MCF 10A (cell line): ENCODE measurements at regions of chr2 and their contacts with region 1.

Region 1: DNA sequence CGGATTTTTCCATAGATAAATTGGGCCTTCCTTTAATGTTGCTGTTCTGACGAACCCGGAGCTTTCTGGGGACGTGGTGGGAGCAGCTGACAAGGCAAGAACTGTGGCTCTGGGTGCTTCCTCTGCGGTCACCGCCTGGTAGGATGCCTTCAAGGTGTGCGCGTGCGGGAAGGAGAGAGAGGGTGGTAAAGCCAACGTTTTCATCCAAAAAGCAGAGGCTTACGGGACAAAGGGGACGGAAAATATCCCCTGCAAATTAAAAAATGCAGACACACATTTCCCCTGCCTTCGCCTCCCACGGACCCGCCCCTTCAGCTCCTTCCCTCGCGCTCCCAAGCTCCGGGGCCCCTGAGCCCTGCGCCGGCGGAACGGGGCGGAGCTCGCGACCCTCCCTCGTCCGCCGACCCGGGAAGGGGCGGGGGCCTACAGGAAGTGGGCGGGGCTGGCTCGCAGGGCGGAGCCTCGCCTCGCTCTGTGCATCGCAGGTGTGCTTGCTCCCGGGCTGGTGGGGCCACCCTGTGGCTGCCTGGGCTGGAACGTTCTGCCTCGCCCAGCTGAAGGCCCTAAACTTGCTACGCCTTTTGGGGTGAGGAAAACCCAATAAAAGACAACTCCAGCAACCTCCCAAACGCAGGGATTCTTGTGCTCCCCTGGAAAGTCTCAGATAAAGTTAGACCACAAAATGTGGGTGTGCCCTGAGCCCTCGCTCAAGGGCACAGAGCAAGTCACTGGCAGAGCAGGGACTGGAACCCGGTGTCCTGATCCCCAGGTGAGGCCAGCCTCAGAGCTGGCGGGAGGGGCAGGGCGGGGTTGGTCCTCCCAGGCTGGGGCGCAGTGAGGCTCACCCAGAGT is 25.4 kb upstream of the SLC66A3 start:
- DNase-seq: peak; percentile 34
- H3K4me3 Mint-ChIP-seq: peak overlapping the region; percentile 21
- H3K27ac Mint-ChIP-seq: no peak overlapping the region
- H3K4me1 Mint-ChIP-seq: peaks cover 7% of the 10 kb centered on the region
- H3K27me3 Mint-ChIP-seq: peaks cover 11% of the 10 kb centered on the region
- CTCF ChIP-seq: no peak

Region 2: GRCh38 chr2:10493636-10494281 is 636.1 kb before region 1 on chr2:
- CTCF ChIA-PET with region 1: no interaction called
- POLR2A ChIA-PET with region 1: no interaction called
- intact Hi-C with region 1: no loop called
- DNase-seq: peak; percentile 98
- H3K4me3 Mint-ChIP-seq: no peak overlapping the region
- H3K27ac Mint-ChIP-seq: peak overlapping the region; percentile 77
- H3K4me1 Mint-ChIP-seq: peaks cover 27% of the 10 kb centered on the region
- H3K27me3 Mint-ChIP-seq: peaks cover 15% of the 10 kb centered on the region
- CTCF ChIP-seq: no peak

Region 3: DNA sequence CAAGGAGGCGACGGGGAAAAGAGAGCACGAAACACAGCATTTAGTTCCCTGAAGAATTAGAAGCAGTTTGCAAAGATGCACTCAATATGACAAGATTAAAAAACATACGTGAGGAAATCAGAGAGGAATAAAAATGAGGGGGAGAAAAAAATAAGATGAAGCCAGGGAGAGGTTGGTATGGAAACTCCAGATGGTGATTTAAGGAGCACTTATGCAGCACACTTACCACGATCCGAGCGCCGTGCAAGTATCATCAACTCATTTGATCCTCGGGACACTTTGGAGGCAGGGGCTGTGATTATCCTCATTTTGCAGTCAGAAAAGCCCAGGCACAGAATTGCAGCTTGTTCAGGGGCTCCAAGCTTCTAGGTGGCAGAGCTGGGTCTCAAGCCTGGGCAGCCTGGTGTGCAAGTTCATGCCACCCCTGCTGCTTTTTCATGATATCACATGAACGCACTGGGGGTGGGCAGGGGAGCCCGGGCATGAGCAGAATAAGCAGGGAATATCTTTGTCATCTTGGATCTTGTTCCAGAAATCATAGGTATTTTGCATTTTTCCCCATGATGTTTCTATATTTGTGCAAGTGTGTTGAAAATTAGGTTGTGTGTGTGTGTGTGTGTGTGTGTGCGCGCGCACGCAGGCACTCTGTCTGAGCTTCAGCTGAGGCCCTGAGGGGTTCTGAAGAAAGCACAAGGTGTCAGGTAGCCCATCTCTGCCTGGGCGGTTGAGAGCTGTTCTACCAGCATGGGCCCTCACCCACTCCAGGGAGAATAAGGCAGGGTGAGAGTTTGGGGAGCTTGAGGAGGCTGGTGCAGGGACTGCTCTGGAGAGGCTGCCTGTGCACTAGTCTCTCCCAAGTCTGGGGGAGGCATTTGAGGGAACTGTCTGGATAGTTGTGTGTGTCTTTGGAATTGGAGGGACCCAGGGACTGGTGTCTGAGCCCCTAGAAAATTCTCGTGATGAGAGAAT is 292.2 kb before region 1 on chr2:
- CTCF ChIA-PET with region 1: interaction called, 189 read pairs
- POLR2A ChIA-PET with region 1: no interaction called
- intact Hi-C with region 1: no loop called
- DNase-seq: no peak
- H3K4me3 Mint-ChIP-seq: no peak overlapping the region
- H3K27ac Mint-ChIP-seq: no peak overlapping the region
- H3K4me1 Mint-ChIP-seq: no peaks in the 10 kb centered on the region
- H3K27me3 Mint-ChIP-seq: peaks cover 28% of the 10 kb centered on the region
- CTCF ChIP-seq: no peak

Region 4: DNA sequence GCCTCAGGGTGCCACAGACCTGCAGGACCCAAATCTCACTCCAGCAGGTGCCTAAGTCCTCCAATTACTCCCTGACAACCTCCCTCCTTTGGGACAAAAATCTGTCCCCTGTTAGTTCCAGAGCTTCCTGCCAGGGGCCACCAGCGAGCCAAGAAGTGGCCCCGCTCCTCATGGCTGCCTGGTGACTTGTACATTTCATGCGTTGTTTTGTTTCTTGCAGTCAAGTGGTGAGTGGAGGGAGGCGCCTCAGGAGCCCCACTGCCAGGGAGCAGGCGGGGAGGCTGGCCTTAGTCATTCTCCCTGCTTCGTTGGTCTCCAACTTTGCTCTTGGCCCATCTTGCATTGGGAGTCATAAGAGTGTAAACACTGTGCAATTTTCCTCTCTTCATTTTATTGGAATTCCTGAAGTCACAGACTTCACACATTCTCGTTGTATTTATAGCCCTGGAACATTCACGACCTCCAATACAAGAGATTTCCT is 136.8 kb before region 1 on chr2:
- CTCF ChIA-PET with region 1: no interaction called
- POLR2A ChIA-PET with region 1: no interaction called
- intact Hi-C with region 1: no loop called
- DNase-seq: no peak
- H3K4me3 Mint-ChIP-seq: no peak overlapping the region
- H3K27ac Mint-ChIP-seq: no peak overlapping the region
- H3K4me1 Mint-ChIP-seq: no peaks in the 10 kb centered on the region
- H3K27me3 Mint-ChIP-seq: peaks cover 49% of the 10 kb centered on the region
- CTCF ChIP-seq: no peak

Region 5: DNA sequence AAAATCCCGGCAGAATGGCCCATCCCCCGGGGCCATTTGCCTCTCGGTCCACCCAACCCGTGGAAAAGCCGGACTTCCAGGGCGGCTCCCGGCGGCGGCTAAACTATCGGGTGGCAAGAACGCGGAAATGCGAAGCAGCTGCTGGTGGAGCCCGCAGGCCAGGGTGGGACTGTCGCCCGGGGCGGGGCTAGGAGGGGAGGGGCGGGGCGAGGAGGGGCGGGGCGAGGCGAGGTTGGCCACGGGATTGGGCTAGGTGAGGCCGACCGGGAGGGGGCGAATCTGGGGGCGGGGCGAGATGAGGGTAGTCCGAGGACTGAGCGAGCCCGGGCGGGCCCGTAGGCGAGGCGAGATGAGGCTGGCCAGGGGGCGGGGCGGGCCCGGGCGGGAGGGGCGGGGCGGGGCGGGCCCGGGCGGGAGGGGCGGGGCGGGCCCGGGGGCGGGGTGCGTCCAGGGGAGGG is 25.1 kb after region 1 on chr2:
- CTCF ChIA-PET with region 1: interaction called, 4 read pairs
- POLR2A ChIA-PET with region 1: interaction called, 11 read pairs
- intact Hi-C with region 1: no loop called
- DNase-seq: peak; percentile 95
- H3K4me3 Mint-ChIP-seq: peak overlapping the region; percentile 67
- H3K27ac Mint-ChIP-seq: no peak overlapping the region
- H3K4me1 Mint-ChIP-seq: no peaks in the 10 kb centered on the region
- H3K27me3 Mint-ChIP-seq: no peaks in the 10 kb centered on the region
- CTCF ChIP-seq: no peak

Region 6: GRCh38 chr2:11212645-11213044 is 82.8 kb after region 1 on chr2:
- CTCF ChIA-PET with region 1: interaction called, 15 read pairs
- POLR2A ChIA-PET with region 1: no interaction called
- intact Hi-C with region 1: no loop called
- DNase-seq: no peak
- H3K4me3 Mint-ChIP-seq: no peak overlapping the region
- H3K27ac Mint-ChIP-seq: peak overlapping the region; percentile 18
- H3K4me1 Mint-ChIP-seq: no peaks in the 10 kb centered on the region
- H3K27me3 Mint-ChIP-seq: no peaks in the 10 kb centered on the region
- CTCF ChIP-seq: no peak

Region 7: DNA sequence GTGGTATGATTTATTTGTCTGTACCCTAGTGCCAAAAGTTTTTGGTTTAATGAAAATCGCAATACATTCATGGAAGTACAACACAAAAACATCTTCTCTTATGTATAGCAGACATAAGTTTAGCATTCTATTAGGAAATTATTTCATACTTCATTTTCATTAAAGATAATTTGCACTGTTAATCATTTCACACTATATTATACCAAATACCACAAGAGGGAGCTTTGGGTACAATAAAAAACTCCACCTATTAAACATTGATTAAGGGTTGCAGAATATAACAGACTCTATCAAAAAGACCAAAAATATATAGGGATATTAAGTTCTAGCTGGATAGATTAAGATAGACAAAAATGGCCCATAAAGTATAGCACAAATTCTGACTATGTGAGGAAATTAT is 104.5 kb after region 1 on chr2:
- CTCF ChIA-PET with region 1: interaction called, 14 read pairs
- POLR2A ChIA-PET with region 1: no interaction called
- intact Hi-C with region 1: loop called (anchors 2 kb)
- DNase-seq: peak; percentile 36
- H3K4me3 Mint-ChIP-seq: no peak overlapping the region
- H3K27ac Mint-ChIP-seq: no peak overlapping the region
- H3K4me1 Mint-ChIP-seq: no peaks in the 10 kb centered on the region
- H3K27me3 Mint-ChIP-seq: no peaks in the 10 kb centered on the region
- CTCF ChIP-seq: peak; percentile 64

Region 8: GRCh38 chr2:11305958-11306357 is 176.1 kb after region 1 on chr2:
- CTCF ChIA-PET with region 1: no interaction called
- POLR2A ChIA-PET with region 1: no interaction called
- intact Hi-C with region 1: no loop called
- DNase-seq: peak; percentile 46
- H3K4me3 Mint-ChIP-seq: no peak overlapping the region
- H3K27ac Mint-ChIP-seq: no peak overlapping the region
- H3K4me1 Mint-ChIP-seq: peaks cover 17% of the 10 kb centered on the region
- H3K27me3 Mint-ChIP-seq: no peaks in the 10 kb centered on the region
- CTCF ChIP-seq: no peak

Region 9: GRCh38 chr2:11411768-11412448 is 282.1 kb after region 1 on chr2:
- CTCF ChIA-PET with region 1: interaction called, 4 read pairs
- POLR2A ChIA-PET with region 1: no interaction called
- intact Hi-C with region 1: loop called (anchors 1 kb)
- DNase-seq: peak; percentile 43
- H3K4me3 Mint-ChIP-seq: no peak overlapping the region
- H3K27ac Mint-ChIP-seq: no peak overlapping the region
- H3K4me1 Mint-ChIP-seq: peaks cover 6% of the 10 kb centered on the region
- H3K27me3 Mint-ChIP-seq: no peaks in the 10 kb centered on the region
- CTCF ChIP-seq: peak; percentile 84

Region 10: DNA sequence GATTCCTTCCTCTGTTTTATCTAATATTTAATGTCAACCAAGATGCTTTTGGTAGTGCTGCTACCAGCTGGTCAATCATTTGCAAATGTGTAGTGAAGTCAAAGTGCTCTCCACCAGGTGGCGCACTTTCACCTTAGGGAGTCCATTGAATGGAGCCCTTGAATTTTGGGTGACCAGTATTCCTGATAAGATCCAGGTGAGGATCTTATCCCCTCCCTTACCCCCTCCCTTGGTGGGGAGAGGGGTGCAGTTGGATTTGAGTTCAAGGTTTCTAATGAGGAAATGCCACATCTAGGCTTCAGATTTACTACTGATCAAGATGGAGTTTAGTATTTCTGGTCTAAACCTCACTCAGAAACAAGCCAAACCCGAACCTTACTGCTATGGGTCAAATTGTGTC is 348.2 kb after region 1 on chr2:
- CTCF ChIA-PET with region 1: interaction called, 3 read pairs
- POLR2A ChIA-PET with region 1: interaction called, 3 read pairs
- intact Hi-C with region 1: loop called (anchors 1 kb)
- DNase-seq: peak; percentile 93
- H3K4me3 Mint-ChIP-seq: no peak overlapping the region
- H3K27ac Mint-ChIP-seq: no peak overlapping the region
- H3K4me1 Mint-ChIP-seq: peaks cover 2% of the 10 kb centered on the region
- H3K27me3 Mint-ChIP-seq: peaks cover 27% of the 10 kb centered on the region
- CTCF ChIP-seq: peak; percentile 77

Region 11: GRCh38 chr2:11873356-11874154 is 743.7 kb after region 1 on chr2:
- CTCF ChIA-PET with region 1: no interaction called
- POLR2A ChIA-PET with region 1: no interaction called
- intact Hi-C with region 1: no loop called
- DNase-seq: peak; percentile 74
- H3K4me3 Mint-ChIP-seq: no peak overlapping the region
- H3K27ac Mint-ChIP-seq: no peak overlapping the region
- H3K4me1 Mint-ChIP-seq: peaks cover 18% of the 10 kb centered on the region
- H3K27me3 Mint-ChIP-seq: no peaks in the 10 kb centered on the region
- CTCF ChIP-seq: no peak